WTC11 (cell line): ENCODE measurements at regions of chr7 and their contacts with region 1.

Region 1: GRCh38 chr7:44240983-44241510 is 40.3 kb downstream of the YKT6 start:
- DNase-seq: peak; percentile 77
- ATAC-seq: peak; percentile 89
- H3K4me3 Mint-ChIP-seq: no peak overlapping the region
- H3K27ac Mint-ChIP-seq: no peak overlapping the region
- H3K4me1 Mint-ChIP-seq: no peaks in the 10 kb centered on the region
- H3K27me3 Mint-ChIP-seq: no peaks in the 10 kb centered on the region; the same call in 1 of the 2 replicates
- CTCF ChIP-seq: no peak; the same call in 1 of the 2 replicates

Region 2: GRCh38 chr7:44257618-44258422 is 16.8 kb after region 1 on chr7:
- CTCF ChIA-PET with region 1: interaction called, 12 read pairs
- POLR2A ChIA-PET with region 1: no interaction called
- DNase-seq: no peak
- ATAC-seq: no peak
- H3K4me3 Mint-ChIP-seq: no peak overlapping the region
- H3K27ac Mint-ChIP-seq: no peak overlapping the region; the same call in 1 of the 2 replicates
- H3K4me1 Mint-ChIP-seq: no peaks in the 10 kb centered on the region
- H3K27me3 Mint-ChIP-seq: no peaks in the 10 kb centered on the region
- CTCF ChIP-seq: no peak

Region 3: DNA sequence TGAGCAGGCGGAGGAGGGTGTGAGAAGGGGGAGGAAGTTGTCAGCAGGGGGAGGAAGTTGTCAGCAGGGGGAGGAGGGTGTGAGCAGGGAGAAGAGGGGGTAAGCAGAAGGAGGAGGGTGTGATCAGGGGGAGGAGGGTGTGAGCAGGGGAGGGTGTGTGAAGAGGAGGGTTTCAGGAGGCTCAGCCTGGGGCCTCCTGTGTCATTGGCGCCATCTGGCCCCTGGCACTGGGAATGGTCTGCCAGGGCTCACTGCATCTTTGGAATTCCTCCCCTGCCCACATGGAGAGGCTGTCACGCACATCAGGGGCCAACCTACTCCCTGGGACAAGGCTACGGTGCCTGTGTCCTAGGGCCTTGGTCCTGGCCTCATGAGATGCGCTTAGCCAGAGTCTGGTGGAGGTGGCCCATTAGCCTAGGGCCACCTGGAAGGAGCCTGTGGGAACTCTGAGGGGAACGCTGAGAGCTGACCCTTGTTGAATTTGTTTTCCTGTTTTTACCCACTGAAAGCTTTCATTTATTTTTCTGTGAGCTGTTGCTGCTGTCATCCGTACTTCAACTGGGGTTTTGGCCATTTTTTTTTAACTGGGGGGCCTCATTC is 66.4 kb after region 1 on chr7:
- CTCF ChIA-PET with region 1: interaction called, 28 read pairs
- POLR2A ChIA-PET with region 1: no interaction called
- DNase-seq: peak; percentile 54
- ATAC-seq: peak; percentile 50
- H3K4me3 Mint-ChIP-seq: no peak overlapping the region
- H3K27ac Mint-ChIP-seq: no peak overlapping the region
- H3K4me1 Mint-ChIP-seq: peaks cover 4% of the 10 kb centered on the region; the same call in 1 of the 2 replicates
- H3K27me3 Mint-ChIP-seq: peaks cover 61% of the 10 kb centered on the region
- CTCF ChIP-seq: no peak

Region 4: DNA sequence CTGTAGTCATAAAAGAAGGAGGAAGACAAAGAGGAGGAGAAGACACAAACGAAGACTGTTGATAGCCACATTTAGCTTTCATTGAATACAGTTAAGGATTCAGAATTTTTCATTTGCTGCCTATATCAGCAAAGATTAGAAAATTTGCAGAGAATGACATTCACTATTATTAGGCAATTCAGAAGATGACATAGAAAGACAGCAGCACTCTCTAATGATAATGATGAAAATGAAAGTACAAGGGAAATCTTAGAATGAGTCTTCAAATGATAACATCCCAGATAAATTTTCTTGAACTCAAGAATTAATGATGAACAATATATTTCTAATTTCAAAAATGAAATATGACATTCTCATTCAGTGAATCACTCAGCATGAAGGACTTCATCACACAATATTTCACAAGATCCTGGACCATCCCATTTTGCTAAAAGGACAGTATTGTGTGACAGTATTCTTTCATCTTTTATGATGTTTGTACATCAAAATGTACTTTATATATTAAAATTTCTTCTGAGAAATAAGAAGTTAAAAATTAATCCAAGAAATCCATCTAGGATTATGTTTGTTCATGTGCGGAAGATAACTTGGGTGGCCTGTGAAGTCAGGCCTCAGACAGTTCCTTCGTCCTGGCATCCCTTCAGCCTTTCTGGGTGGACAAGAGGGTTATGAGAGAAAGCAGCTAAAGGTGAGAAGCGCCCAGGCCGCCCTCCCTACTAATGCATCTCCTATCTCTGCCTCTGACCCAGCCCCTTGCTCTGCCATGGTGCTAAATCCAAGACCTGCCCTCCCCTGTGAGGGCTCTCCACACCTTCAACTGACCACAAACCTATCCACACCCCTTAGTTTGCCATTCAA is 131.7 kb after region 1 on chr7:
- CTCF ChIA-PET with region 1: interaction called, 27 read pairs
- POLR2A ChIA-PET with region 1: no interaction called
- DNase-seq: no peak
- ATAC-seq: no peak
- H3K4me3 Mint-ChIP-seq: no peak overlapping the region
- H3K27ac Mint-ChIP-seq: no peak overlapping the region
- H3K4me1 Mint-ChIP-seq: no peaks in the 10 kb centered on the region
- H3K27me3 Mint-ChIP-seq: peaks cover 13% of the 10 kb centered on the region
- CTCF ChIP-seq: no peak

Region 5: DNA sequence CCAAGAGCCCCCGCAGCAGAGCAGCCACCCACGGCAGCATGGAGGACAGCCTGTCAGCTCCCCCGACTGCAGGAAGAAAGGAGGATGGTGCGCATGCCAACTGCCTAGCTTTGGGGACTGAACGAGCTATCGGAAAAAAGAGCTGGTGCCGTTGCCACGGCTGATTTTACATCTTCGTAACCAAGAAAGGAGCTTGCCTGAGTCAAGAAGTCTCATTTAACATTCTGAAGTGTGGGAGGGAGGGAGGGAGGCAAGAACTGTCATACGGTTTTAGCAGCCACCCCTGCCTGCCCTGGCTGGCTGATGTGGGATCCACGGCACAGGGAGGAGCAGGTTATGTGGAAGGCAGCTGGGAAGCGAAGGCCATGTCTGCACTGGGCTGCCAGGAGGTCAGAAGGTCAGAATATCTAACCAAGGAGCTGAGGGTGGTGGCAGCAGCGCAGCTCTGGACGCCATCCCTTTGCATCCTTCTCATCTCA is 159.0 kb after region 1 on chr7:
- CTCF ChIA-PET with region 1: no interaction called
- POLR2A ChIA-PET with region 1: no interaction called
- DNase-seq: no peak
- ATAC-seq: no peak
- H3K4me3 Mint-ChIP-seq: no peak overlapping the region
- H3K27ac Mint-ChIP-seq: no peak overlapping the region; the same call in 1 of the 2 replicates
- H3K4me1 Mint-ChIP-seq: no peaks in the 10 kb centered on the region
- H3K27me3 Mint-ChIP-seq: no peaks in the 10 kb centered on the region
- CTCF ChIP-seq: no peak